Calu3 (cell line): ENCODE measurements at regions of chr9 and their contacts with region 1.

Region 1: DNA sequence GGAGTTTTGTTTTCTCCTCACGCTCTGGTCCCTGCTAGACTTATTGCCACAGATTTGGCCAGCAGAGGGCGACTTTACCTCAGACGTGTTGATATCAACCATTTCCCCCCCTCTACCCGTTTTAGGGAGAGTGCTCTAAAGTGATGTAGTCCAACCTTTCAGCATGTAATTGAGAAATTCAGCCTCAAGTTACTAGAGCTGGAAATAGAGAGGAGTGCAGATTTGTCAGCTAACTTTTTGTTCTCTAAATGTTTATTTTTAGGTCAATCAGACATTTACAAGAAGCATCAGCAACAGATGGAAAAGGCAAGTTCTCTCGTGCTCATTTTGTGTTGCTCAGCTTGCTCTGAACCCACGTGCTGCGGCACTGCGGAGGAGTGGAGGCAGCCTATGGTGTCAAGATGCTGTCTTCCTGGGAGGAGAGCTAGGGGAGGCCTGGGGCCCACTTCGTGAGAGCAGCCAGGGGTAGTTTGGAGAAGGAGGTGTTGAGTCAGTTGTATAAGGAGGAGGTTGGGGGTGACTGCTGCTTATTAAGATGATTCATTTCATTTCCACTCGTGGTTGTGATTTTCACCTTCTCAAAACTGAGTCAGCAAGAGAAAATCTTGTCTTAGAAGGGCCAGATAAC is 53.6 kb downstream of the GPR107 start:
- DNase-seq: peak; percentile 60
- H3K4me3 Mint-ChIP-seq: no peak overlapping the region
- H3K27ac Mint-ChIP-seq: no peak overlapping the region
- H3K4me1 Mint-ChIP-seq: no peaks in the 10 kb centered on the region
- H3K27me3 Mint-ChIP-seq: no peaks in the 10 kb centered on the region
- CTCF ChIP-seq: peak; percentile 31

Region 2: GRCh38 chr9:130078547-130078946 is 28.8 kb before region 1 on chr9:
- CTCF ChIA-PET with region 1: no interaction called
- intact Hi-C with region 1: no loop called
- DNase-seq: no peak
- H3K4me3 Mint-ChIP-seq: no peak overlapping the region
- H3K27ac Mint-ChIP-seq: no peak overlapping the region
- H3K4me1 Mint-ChIP-seq: no peaks in the 10 kb centered on the region
- H3K27me3 Mint-ChIP-seq: no peaks in the 10 kb centered on the region
- CTCF ChIP-seq: no peak

Region 3: DNA sequence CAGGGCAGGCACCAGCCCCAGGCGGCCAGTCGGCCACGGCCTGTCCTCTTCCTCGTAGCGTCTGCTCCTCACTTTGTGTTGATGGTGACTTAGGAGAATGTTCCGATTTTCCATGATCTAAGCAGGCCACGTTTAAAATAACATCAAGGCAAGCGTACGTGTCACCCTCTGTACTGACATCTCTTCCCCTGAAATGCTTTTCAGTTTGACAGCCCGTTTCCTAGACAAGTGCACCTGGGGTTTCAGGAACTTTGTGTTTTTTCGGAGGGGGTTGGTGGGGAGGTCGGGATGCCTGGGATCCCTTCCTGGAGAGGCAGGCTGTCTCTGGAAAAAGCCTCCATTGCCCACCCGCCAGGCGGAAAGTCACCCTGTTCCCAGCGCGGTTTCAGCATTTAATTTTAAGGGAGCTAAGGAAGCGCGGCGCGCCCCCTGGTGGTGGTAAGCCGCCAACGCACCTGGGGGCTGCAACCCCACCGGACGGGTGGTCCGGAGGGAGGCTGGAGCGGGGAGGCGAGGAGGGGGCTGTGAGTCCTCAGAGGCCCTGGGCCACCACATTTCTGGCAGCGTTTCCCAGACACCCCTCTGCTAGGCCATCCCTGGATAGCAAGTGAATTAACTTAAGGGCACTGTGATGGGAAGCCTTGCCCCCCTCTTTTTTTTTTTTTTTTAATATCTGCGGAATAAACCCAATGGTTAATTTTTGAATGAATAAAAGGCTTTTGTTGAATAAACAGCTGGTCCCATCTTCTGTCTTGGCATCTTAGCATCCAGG is 128.7 kb after region 1 on chr9:
- CTCF ChIA-PET with region 1: interaction called, 5 read pairs
- intact Hi-C with region 1: loop called (anchors 1 kb)
- DNase-seq: peak; percentile 50
- H3K4me3 Mint-ChIP-seq: no peak overlapping the region
- H3K27ac Mint-ChIP-seq: no peak overlapping the region
- H3K4me1 Mint-ChIP-seq: no peaks in the 10 kb centered on the region
- H3K27me3 Mint-ChIP-seq: no peaks in the 10 kb centered on the region
- CTCF ChIP-seq: peak; percentile 93